ENCODE measurements at regions of chr6 and their contacts with region 1.

Region 1: GRCh38 chr6:6712258-6712999 is 123.9 kb downstream of the LY86 start:
- DNase-seq: peak; percentile 60 to 83
- ATAC-seq: peak; percentile 89 to 92
- H3K4me3 ChIP-seq: no peak overlapping the region
- H3K27ac ChIP-seq: peak overlapping the region; percentile 68 to 80
- H3K4me1 ChIP-seq: peaks cover 21% of the 10 kb centered on the region
- CTCF ChIP-seq: peak; percentile 37; the same call in 2 of the 3 replicates
- EP300 ChIP-seq: no peak
- POLR2A ChIP-seq: no peak
- RAD21 ChIP-seq: peak; percentile 49 to 55

Region 2: GRCh38 chr6:6696867-6697531 is 15.4 kb before region 1 on chr6:
- CTCF ChIA-PET with region 1: interaction called, 10 read pairs
- POLR2A ChIA-PET with region 1: no interaction called
- DNase-seq: peak; percentile 33 to 73
- ATAC-seq: peak; percentile 25 to 75; a peak in 3 of 6 replicates
- H3K4me3 ChIP-seq: no peak overlapping the region
- H3K27ac ChIP-seq: no peak overlapping the region; a peak in 1 of 6 replicates
- H3K4me1 ChIP-seq: peaks cover 18% of the 10 kb centered on the region
- CTCF ChIP-seq: peak; percentile 52
- EP300 ChIP-seq: no peak
- POLR2A ChIP-seq: no peak
- RAD21 ChIP-seq: peak; percentile 42 to 60; a peak in 4 of 5 replicates

Region 3: GRCh38 chr6:6724539-6725467 is 12.4 kb after region 1 on chr6:
- CTCF ChIA-PET with region 1: interaction called, 45 read pairs
- POLR2A ChIA-PET with region 1: no interaction called
- DNase-seq: peak; percentile 44
- ATAC-seq: peak; percentile 78 to 94; a peak in 5 of 6 replicates
- H3K4me3 ChIP-seq: 0 out of 3 replicates have a peak overlapping the region, but pooled peaks have one; percentile 9
- H3K27ac ChIP-seq: peak overlapping the region; percentile 63 to 79; a peak in 5 of 6 replicates
- H3K4me1 ChIP-seq: peaks cover 8% of the 10 kb centered on the region
- CTCF ChIP-seq: peak; percentile 65
- EP300 ChIP-seq: no peak
- POLR2A ChIP-seq: no peak
- RAD21 ChIP-seq: peak; percentile 81 to 82

Measured in A549 (cell line).